ENCODE measurements at regions of chr2 and their contacts with region 1.

Region 1: DNA sequence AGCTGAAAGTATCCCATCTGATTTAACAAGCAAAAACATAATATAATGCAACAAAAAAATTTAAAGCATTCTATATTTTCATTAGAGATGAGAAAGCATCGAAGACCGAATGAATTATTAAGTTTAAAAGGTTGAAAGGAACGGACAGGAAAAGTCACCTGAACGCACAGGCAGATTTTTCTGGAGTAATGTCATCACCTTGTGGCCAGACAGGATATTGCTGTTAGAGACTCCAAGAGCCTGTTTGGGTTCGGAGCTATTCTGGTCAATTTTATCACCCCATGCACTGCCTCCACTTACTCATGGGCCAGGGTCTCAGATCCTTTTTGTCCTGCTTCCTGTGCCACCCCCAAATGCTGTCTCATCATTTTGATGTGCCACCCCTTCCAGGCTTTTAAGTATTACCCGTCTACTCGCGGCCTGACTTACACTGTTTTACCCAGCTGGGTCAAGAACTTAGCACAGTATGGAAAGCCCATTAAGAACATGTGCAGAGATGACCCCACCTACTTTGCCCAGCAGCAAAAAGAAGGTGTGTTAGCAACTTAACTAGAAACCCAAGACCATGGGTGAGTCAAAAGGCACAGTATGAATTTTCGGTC is 27.3 kb downstream of the GKN2 start:
- DNase-seq: no peak
- ATAC-seq: no peak
- H3K4me3 ChIP-seq: no peak overlapping the region
- H3K27ac ChIP-seq: no peak overlapping the region
- H3K4me1 ChIP-seq: no peaks in the 10 kb centered on the region
- H3K27me3 ChIP-seq: no peaks in the 10 kb centered on the region
- CTCF ChIP-seq: peak; percentile 47 to 78 (median 71)
- POLR2A ChIP-seq: no peak

Region 2: DNA sequence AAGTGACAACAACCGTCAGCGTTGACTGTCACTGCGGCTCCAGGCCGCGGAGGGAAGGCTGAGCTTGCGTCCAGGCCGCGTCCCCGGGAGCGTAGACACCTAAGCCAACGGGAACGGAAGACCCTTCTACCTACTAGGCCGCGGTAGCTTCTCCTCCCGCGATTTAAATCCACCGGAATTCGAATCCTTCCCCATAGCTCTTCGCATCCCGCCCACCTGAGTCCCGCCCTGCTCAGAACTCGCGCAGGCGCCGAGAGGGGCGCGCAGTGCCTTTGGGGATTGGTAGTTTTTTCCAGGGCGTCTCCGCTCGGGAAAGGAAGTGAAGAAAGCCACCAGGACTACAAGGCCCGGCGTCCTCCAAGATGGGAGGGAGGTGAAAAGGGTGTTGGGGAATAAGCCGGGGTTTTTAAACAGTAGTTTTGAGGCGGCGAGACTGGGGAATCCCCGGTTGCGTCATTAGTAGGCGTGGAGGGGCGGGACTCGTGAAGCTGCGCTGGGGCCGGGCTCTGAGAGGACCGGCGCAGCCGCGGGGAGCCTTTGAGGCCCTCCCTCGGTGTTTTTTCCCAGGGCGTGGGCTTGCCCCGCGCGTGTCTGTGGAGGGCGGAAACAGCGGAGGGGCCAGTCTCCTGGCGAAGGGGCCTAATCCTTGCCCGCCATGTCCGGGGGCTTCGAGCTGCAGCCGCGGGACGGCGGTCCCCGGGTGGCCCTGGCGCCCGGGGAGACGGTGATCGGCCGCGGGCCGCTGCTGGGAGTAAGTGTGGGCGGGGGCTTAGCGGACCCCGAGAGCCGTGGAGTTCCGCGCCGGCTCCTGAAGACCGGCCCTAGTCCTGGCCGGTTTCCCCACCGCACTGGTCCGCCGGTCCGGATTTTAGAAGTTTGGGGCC is 458.1 kb before region 1 on chr2 and contains the starts of genes APLF and FBXO48:
- in situ Hi-C with region 1: loop called in 1 of 4 experiments (anchors 10 kb)
- intact Hi-C with region 1: loop called (anchors 5 kb)
- DNase-seq: peak; percentile 97 to 98
- ATAC-seq: peak; percentile 99
- H3K4me3 ChIP-seq: peak within 1 kb of the TSS; percentile 75 to 93 (median 83)
- H3K27ac ChIP-seq: peak within 1 kb of the TSS; percentile 80 to 89 (median 87)
- H3K4me1 ChIP-seq: peaks cover 20 to 21% of the 10 kb centered on the region in 2 donors
- H3K27me3 ChIP-seq: no peaks in the 10 kb centered on the region
- CTCF ChIP-seq: no peak
- POLR2A ChIP-seq: peak; percentile 47 to 77
- total RNA-seq, gene APLF: 2.3 to 4.8 (median 3.5) TPM
- total RNA-seq, gene FBXO48: 1.1 to 1.9 (median 1.5) TPM

Region 3: GRCh38 chr2:68487773-68488355 is 437.5 kb before region 1 on chr2:
- in situ Hi-C with region 1: loop called in 2 of 4 experiments (anchors 10 to 25 kb)
- intact Hi-C with region 1: no loop called
- DNase-seq: no peak
- ATAC-seq: no peak
- H3K4me3 ChIP-seq: no peak overlapping the region
- H3K27ac ChIP-seq: no peak overlapping the region
- H3K4me1 ChIP-seq: no peaks in the 10 kb centered on the region
- H3K27me3 ChIP-seq: no peaks in the 10 kb centered on the region
- CTCF ChIP-seq: peak in 3 of 5 experiments; percentile 18 to 45 (median 33)
- POLR2A ChIP-seq: no peak

Region 4: DNA sequence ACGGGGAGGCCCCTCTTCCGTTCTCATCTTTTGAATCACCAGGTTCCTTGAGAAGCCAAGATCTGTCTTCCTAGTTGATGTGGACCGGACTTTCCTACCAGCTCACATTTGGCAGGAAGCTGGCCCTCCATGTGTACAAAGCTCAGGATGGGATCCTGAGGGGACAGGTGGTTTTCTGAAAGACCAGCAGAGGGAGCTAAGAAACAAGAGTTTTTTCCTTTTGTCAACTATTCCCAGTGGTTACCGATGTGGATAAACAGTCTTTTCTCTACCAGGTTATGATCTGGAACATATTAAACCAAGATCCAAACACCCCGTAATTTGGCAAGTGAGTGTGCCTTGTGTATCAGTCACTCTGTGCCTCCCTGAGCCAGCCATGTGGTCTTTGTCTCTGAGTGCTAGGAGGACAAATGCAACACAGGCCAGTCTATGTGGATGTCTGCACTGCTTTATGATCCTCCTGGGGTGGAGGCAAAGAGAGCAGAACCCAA is 215.9 kb before region 1 on chr2:
- in situ Hi-C with region 1: no loop called
- intact Hi-C with region 1: loop called (anchors 5 kb)
- DNase-seq: no peak
- ATAC-seq: no peak
- H3K4me3 ChIP-seq: no peak overlapping the region
- H3K27ac ChIP-seq: no peak overlapping the region
- H3K4me1 ChIP-seq: no peaks in the 10 kb centered on the region
- H3K27me3 ChIP-seq: no peaks in the 10 kb centered on the region
- CTCF ChIP-seq: peak in 4 of 5 experiments; percentile 8 to 52 (median 43)
- POLR2A ChIP-seq: no peak

Region 5: GRCh38 chr2:68751397-68752339 is 173.7 kb before region 1 on chr2:
- in situ Hi-C with region 1: loop called in 3 of 4 experiments (anchors 5 to 25 kb)
- intact Hi-C with region 1: loop called (anchors 1 kb)
- DNase-seq: peak; percentile 62 to 65
- ATAC-seq: peak; percentile 87 to 90
- H3K4me3 ChIP-seq: no peak overlapping the region
- H3K27ac ChIP-seq: no peak overlapping the region
- H3K4me1 ChIP-seq: peaks cover 4 to 10% of the 10 kb centered on the region in 2 donors
- H3K27me3 ChIP-seq: no peaks in the 10 kb centered on the region
- CTCF ChIP-seq: peak; percentile 63 to 91 (median 78)
- POLR2A ChIP-seq: no peak

Measured in gastrocnemius medialis (tissue), 4 donors.